K562 (cell line): ENCODE measurements at regions of chr14 and their contacts with region 1.

Region 1: DNA sequence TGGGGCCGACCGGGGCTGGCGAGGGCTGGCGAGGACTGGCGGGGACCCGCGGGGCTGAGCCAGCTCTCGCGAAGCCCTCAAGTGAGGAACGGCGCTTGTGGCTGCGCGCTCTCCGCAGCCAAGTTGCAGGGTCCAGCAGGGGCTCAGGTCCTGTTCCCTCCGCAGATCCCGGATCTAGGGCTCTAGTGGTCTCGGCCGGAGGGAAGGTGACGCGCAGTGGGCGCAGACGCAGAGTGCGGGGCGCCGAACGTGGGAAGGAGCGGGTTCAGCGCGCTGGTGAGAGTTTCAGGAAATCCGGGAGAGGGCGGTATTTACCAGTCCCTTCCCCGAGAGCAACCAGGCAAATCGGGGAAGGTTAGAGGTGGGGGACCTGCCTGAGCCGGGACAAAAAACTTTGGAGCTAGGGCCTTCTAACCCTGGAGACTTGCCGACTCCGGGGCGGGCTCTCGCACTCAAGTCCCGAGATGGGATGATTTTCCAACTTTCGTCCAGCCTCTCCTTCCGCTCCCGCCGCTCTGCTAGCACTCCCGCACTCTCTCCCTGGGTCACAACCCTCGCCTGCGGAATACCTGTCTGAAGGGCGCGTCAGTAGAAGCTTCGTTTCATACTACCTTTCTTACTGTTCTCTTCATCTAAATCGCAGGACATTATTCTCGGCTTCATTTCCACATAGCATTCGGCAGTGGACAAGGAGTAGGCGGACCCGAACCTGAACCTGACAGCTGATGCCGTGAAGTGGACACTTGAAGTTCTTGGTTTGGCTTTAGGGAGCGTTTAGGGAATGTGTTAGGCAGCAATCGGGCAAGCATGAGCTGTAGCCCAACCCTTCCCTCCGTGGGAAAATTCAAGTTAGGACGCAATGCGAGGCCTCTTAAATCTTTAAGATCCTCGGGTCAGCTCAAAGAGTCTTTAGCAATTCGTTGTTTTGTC is 13.6 kb upstream of the PAX9 start:
- DNase-seq: peak; percentile 10 to 48 (median 30)
- ATAC-seq: peak; percentile 96
- H3K4me3 ChIP-seq: peak overlapping the region; percentile 36
- H3K27ac ChIP-seq: no peak overlapping the region
- H3K4me1 ChIP-seq: peaks cover 0 to 17% of the 10 kb centered on the region in 2 experiments; a peak in 2 of 5 replicates
- H3K27me3 ChIP-seq: peaks cover 0 to 10% of the 10 kb centered on the region in 2 experiments; a peak in 3 of 5 replicates
- CTCF ChIP-seq: peak; percentile 48 to 54 (median 53); a peak in 5 of 6 replicates
- EP300 ChIP-seq: no peak
- POLR2A ChIP-seq: no peak
- RAD21 ChIP-seq: peak; percentile 29 to 70; a peak in 3 of 4 replicates

Region 2: DNA sequence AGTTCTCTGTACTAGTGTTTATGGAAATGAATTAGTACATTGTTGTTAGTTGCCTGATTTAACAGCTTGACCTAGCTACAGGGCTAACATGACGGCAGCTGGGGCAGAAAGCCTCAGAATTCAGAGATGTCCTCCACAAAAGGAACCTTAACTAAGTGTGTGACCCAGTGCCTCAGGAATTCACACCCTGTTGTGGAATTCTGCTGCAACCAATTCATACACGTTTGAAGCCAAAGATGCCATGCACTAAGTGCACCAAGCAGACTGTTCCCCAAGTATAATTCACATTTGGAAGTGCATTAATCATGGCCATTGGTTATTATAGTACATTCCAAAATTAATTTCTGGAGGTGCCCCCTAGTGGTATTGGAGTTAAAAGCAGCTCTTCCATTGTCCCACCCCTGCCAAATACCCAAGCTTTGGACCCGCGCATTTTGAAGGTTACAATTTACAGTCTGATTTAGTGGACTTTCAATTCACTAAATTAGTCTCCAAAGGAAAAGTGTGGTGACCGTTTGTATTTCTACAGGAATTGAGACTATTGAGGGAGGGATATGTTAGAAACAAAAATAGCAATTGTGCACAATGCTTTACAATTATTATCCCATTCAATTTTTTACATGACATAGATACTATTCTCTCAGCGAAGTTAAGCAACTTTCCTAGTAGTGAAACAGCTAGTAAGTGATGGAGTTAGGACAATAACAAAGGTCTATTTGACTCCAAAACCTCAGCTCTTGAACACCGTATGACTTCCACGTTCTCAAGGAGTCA is 99.5 kb after region 1 on chr14:
- CTCF ChIA-PET with region 1: no interaction called
- POLR2A ChIA-PET with region 1: no interaction called
- in situ Hi-C with region 1: no loop called
- intact Hi-C with region 1: loop called (anchors 5 kb)
- DNase-seq: peak; percentile 10 to 37 (median 14)
- ATAC-seq: peak; percentile 78
- H3K4me3 ChIP-seq: no peak overlapping the region
- H3K27ac ChIP-seq: no peak overlapping the region
- H3K4me1 ChIP-seq: no peaks in the 10 kb centered on the region; a peak in 1 of 5 replicates
- H3K27me3 ChIP-seq: no peaks in the 10 kb centered on the region
- CTCF ChIP-seq: peak; percentile 33 to 56 (median 54)
- EP300 ChIP-seq: no peak
- POLR2A ChIP-seq: no peak
- RAD21 ChIP-seq: no peak

Region 3: GRCh38 chr14:36941783-36942521 is 293.9 kb after region 1 on chr14:
- CTCF ChIA-PET with region 1: no interaction called
- POLR2A ChIA-PET with region 1: no interaction called
- in situ Hi-C with region 1: no loop called
- intact Hi-C with region 1: loop called (anchors 1 kb)
- DNase-seq: peak; percentile 46 to 76 (median 53)
- ATAC-seq: peak; percentile 95
- H3K4me3 ChIP-seq: no peak overlapping the region
- H3K27ac ChIP-seq: no peak overlapping the region
- H3K4me1 ChIP-seq: no peaks in the 10 kb centered on the region
- H3K27me3 ChIP-seq: no peaks in the 10 kb centered on the region
- CTCF ChIP-seq: peak; percentile 79 to 86 (median 80)
- EP300 ChIP-seq: no peak
- POLR2A ChIP-seq: no peak
- RAD21 ChIP-seq: peak; percentile 67 to 78

Region 4: DNA sequence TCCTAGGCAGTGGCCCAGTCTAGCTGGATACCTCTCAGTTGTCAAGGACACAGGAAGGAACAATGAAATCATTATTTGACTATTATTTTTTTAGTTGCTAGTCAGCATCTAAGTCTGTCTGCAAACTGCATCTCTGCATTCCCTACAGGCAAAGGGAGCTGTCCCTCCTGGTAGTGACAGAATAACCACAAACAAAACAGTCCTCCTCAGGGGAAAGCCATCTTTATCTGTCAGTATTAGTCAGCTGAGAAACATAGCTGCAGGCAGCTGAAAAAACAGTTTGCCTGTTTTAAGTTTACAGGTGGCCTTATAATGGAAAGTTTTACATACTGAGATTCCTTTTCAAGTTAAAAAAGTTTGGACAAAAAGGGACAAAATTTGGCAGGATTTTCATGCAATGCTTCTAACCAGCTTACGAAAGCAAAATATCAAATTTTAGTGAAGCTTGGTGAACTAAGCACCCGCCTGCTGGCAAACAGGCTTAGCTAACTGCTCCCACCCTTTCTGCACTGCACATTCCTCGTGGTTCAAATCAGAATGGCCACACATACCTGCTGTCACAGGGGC is 494.8 kb after region 1 on chr14:
- CTCF ChIA-PET with region 1: no interaction called
- POLR2A ChIA-PET with region 1: no interaction called
- in situ Hi-C with region 1: loop called (anchors 25 kb)
- intact Hi-C with region 1: no loop called
- DNase-seq: no peak
- ATAC-seq: peak; percentile 52
- H3K4me3 ChIP-seq: no peak overlapping the region
- H3K27ac ChIP-seq: no peak overlapping the region
- H3K4me1 ChIP-seq: peaks cover 0 to 5% of the 10 kb centered on the region in 2 experiments; a peak in 3 of 5 replicates
- H3K27me3 ChIP-seq: no peaks in the 10 kb centered on the region
- CTCF ChIP-seq: no peak
- EP300 ChIP-seq: no peak
- POLR2A ChIP-seq: no peak
- RAD21 ChIP-seq: no peak

Region 5: DNA sequence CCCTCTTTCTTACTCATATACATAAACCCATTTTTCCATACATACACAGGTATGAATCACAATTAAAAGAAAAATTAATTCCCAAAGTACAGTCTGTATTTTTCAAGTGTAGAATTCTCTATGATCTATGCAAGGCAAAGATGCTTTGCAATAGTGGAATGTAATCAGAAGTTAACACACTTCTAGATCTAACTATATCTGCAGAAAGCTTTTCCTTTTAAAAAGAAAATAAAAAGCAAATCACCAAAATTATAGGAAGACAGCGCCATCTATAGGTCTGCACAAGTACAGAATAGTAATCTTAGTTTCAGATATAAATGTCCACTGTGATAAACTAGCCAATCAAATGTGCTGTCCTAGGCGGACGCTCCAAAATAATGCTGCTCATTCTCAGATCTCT is 502.3 kb after region 1 on chr14:
- CTCF ChIA-PET with region 1: interaction called, 6 read pairs
- POLR2A ChIA-PET with region 1: no interaction called
- in situ Hi-C with region 1: loop called (anchors 25 kb)
- intact Hi-C with region 1: loop called (anchors 2 kb)
- DNase-seq: peak in 2 of 4 experiments; percentile 46 to 47
- ATAC-seq: peak; percentile 69
- H3K4me3 ChIP-seq: no peak overlapping the region
- H3K27ac ChIP-seq: no peak overlapping the region
- H3K4me1 ChIP-seq: peaks cover 5 to 8% of the 10 kb centered on the region in 2 experiments; a peak in 3 of 5 replicates
- H3K27me3 ChIP-seq: no peaks in the 10 kb centered on the region
- CTCF ChIP-seq: peak; percentile 43 to 71 (median 52); a peak in 4 of 6 replicates
- EP300 ChIP-seq: no peak
- POLR2A ChIP-seq: no peak
- RAD21 ChIP-seq: peak in 1 of 2 experiments; percentile 64; a peak in 3 of 4 replicates

Region 6: DNA sequence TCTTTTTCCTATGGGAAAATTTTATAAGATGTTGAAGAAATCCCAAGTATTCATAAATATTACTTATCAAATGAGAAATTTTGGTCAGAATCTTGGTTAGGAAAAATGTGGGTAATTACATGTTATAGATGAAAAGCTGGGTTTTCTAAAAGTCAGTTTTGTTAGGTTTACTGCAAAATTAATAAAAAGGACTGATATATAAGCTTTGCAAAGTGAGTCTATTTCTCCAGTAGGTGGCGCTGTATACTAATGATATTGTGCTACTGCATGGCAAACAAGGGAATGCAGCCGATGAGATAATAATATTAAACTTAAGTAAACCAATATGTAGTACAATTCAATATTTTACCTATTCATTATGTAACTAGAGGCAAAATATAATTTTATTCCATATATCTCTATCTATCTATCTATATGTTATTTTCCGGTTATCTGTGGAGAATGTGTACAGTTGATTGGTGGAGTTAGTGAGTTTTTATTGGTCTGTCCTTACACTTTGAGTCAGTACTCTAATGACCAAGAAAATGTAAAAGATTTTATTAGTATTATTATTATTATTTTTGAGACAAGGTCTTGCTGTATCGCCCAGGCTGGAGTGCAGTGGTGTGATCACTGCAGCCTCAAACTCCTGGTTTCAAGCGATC is 582.6 kb after region 1 on chr14:
- CTCF ChIA-PET with region 1: interaction called, 3 read pairs
- POLR2A ChIA-PET with region 1: interaction called, 3 read pairs
- in situ Hi-C with region 1: no loop called
- intact Hi-C with region 1: loop called (anchors 10 kb)
- DNase-seq: peak; percentile 31 to 65 (median 40)
- ATAC-seq: peak; percentile 78
- H3K4me3 ChIP-seq: no peak overlapping the region
- H3K27ac ChIP-seq: no peak overlapping the region
- H3K4me1 ChIP-seq: no peaks in the 10 kb centered on the region
- H3K27me3 ChIP-seq: no peaks in the 10 kb centered on the region
- CTCF ChIP-seq: peak; percentile 38 to 63 (median 44); a peak in 3 of 6 replicates
- EP300 ChIP-seq: no peak
- POLR2A ChIP-seq: no peak
- RAD21 ChIP-seq: peak; percentile 13 to 40; a peak in 2 of 4 replicates